AG04449 (cell line): ENCODE measurements at regions of chr4 and their contacts with region 1.

Region 1: GRCh38 chr4:85798012-85798770 is 323.2 kb downstream of the ARHGAP24 start:
- DNase-seq: no peak
- H3K4me3 ChIP-seq: no peak overlapping the region
- CTCF ChIP-seq: no peak

Region 2: DNA sequence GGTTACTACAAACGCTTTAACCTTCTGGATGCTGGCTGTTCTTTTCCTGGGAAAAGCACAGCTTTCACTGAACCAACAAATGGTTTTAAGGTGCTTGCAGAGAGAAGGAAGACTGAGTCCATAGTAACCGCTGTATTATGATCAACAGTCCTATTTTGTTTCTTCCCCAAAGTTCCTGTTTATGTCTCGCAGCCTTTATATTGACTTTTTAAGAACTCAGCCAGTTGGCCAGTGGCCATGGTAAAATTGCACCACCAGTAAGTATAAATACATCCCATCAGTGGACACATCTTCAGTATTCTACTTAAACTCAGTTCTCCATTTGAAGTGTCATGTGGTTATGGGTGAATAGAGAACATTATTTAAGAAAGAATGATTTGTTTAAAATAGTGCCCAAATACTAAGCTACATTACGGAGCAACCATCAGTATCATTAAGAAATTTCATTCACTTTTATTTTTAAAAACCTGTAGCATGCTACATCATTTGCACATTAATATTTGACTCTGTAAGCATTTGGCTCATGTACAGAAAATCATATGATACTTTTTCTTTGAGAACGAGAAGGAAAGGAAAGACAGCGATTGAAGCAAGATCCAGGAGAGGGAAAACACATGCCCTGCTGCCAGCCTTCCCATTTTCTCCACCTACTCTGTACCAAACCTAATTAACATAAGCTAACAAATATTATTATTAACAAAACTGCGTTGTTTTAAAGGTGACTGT is 36.2 kb before region 1 on chr4:
- CTCF ChIA-PET with region 1: interaction called, 10 read pairs
- POLR2A ChIA-PET with region 1: no interaction called
- DNase-seq: no peak
- H3K4me3 ChIP-seq: no peak overlapping the region
- CTCF ChIP-seq: no peak

Region 3: DNA sequence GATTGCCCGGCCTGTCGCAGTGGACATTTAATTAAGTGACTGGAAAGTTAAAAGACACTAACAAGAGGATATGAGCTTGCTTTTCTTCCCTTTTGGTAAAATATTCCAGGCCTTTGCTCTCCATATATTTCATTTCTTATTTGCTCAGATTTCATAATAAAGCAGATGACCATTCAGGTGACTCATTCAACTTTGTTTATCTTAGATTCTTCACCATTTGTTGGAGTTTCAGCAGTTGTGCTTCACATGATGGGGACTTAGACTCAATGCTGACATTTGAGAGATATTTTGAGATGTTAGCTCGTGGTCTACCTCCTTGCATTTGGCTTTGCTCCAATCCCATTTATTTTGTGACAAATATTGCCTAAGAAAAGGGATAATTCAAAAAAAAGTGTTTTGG is 11.1 kb before region 1 on chr4:
- CTCF ChIA-PET with region 1: interaction called, 26 read pairs
- POLR2A ChIA-PET with region 1: no interaction called
- DNase-seq: no peak
- H3K4me3 ChIP-seq: no peak overlapping the region
- CTCF ChIP-seq: no peak

Region 4: GRCh38 chr4:85821688-85822455 is 23.7 kb after region 1 on chr4:
- CTCF ChIA-PET with region 1: interaction called, 12 read pairs
- POLR2A ChIA-PET with region 1: no interaction called
- DNase-seq: no peak
- H3K4me3 ChIP-seq: no peak overlapping the region
- CTCF ChIP-seq: no peak

Region 5: DNA sequence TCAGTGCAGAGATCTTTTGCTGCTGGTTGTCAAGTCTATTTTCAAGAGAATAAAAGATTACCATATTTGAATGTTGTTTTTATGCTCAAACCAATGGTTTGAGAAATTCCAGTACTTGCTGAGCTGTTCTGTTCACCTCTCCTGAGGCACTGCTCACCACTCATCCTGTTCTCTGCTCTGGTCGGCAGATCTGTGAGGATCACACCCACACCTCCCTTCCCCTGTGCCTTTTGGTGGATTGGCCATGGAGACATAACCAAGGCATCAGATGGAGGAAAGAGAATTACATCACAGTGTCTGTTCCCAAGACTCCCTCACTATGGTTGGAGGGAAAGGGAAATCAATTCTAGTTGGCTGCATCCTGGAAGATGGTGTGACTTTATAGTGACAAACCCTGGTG is 68.3 kb after region 1 on chr4:
- CTCF ChIA-PET with region 1: interaction called, 11 read pairs
- POLR2A ChIA-PET with region 1: no interaction called
- DNase-seq: no peak
- H3K4me3 ChIP-seq: no peak overlapping the region
- CTCF ChIP-seq: no peak

Region 6: DNA sequence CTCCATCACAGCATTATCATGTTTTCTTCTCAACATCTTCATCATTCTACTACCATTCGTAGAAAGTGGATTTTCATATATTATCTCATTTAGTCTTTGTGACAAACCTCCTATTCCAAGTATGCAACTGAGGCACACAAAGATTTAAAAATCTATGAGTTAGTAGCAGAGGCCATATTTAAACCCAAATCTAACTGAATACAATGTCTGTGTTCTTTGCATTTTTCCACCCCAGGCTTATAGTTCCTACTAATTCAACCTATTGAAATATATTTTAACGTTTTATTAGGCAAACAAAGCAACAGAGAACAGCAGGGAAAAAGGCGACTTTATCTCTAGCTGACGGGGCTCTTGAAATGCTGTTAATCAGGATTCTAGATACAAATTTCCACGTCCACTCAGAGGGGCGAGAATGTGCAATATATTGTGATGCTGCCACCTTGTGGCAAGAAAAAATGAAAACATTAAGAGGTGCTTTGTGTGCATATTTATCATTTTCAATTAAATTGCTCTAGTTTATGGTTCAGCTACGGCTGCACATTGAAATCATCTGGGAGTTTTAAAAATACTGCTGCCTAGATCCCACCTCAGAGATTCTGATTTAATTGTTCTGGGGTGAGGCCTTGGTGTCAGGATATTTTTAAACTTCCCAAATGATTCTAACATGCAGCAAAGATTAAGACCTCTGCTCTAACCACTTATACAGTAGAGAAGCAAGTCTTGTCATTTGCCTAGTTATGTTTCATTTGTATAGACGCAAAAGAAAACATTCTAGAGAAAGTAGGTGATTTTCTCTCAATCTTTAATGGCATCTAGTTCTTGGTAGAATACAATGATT is 245.8 kb after region 1 on chr4:
- CTCF ChIA-PET with region 1: interaction called, 41 read pairs
- POLR2A ChIA-PET with region 1: no interaction called
- DNase-seq: no peak
- H3K4me3 ChIP-seq: no peak overlapping the region
- CTCF ChIP-seq: peak; percentile 33